GM12878 (cell line): ENCODE measurements at regions of chr12 and their contacts with region 1.

Region 1: DNA sequence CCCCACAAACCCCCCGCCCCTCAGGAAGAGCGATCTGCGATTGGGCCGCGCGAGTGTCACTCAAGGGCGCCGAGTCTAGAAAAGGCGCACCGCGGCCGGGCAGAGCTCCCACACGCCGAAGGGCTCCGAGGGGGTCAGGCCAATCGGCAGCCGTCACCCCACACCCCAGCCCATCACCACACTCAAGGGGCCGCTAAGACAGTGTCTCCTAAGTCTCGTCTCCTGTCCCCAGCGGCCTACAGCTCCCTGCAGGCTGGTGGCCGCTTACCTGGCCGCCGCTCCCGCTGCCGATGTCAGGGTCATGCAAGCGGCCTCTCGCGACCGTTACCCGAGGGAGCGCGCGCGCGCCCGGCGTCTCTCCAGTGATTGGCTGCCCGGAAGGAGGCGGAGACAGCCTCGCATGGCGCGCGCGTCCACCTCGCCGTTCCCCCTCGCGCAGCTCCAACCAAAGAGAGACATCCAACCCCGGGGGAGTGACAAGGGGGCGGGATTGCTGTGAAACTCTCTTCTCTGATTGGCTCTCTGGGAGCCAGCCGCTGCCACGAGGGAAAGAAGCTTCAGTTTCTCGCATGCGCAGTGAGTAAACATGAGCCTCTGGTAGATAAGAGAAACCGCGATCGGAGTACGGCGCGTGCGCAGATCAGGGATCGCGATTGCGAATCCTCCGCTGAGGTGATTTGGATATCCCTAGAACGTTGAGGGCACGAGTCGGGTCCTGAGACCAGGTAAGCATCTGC is at the starts of genes MPHOSPH9 and MTRFR:
- DNase-seq: peak; percentile 100
- ATAC-seq: peak; percentile 91
- H3K4me3 ChIP-seq: peak within 1 kb of the TSS; percentile 95
- H3K27ac ChIP-seq: peak within 1 kb of the TSS; percentile 90
- H3K4me1 ChIP-seq: peaks cover 24% of the 10 kb centered on the region
- H3K27me3 ChIP-seq: no peaks in the 10 kb centered on the region
- CTCF ChIP-seq: no peak
- EP300 ChIP-seq: peak in 1 of 2 experiments; percentile 41; a peak in 2 of 4 replicates
- POLR2A ChIP-seq: peak; percentile 99
- RAD21 ChIP-seq: no peak
- polyA plus RNA-seq, gene MPHOSPH9: 11.5 to 13.3 TPM
- polyA plus RNA-seq, gene MTRFR: 30.8 to 33.4 TPM

Region 2: GRCh38 chr12:121802846-121803630 is 1429.9 kb before region 1 on chr12:
- CTCF ChIA-PET with region 1: no interaction called
- POLR2A ChIA-PET with region 1: no interaction called
- RAD21 ChIA-PET with region 1: interaction called, 4 read pairs
- SMC1A ChIA-PET with region 1: no interaction called
- in situ Hi-C with region 1: no loop called
- intact Hi-C with region 1: loop called (anchors 5 kb)
- DNase-seq: peak; percentile 88
- ATAC-seq: peak; percentile 66
- H3K4me3 ChIP-seq: peak overlapping the region; percentile 66
- H3K27ac ChIP-seq: peak overlapping the region; percentile 97
- H3K4me1 ChIP-seq: peaks cover 27% of the 10 kb centered on the region
- H3K27me3 ChIP-seq: no peaks in the 10 kb centered on the region
- CTCF ChIP-seq: no peak
- EP300 ChIP-seq: no peak
- POLR2A ChIP-seq: peak; percentile 89
- RAD21 ChIP-seq: no peak

Region 3: DNA sequence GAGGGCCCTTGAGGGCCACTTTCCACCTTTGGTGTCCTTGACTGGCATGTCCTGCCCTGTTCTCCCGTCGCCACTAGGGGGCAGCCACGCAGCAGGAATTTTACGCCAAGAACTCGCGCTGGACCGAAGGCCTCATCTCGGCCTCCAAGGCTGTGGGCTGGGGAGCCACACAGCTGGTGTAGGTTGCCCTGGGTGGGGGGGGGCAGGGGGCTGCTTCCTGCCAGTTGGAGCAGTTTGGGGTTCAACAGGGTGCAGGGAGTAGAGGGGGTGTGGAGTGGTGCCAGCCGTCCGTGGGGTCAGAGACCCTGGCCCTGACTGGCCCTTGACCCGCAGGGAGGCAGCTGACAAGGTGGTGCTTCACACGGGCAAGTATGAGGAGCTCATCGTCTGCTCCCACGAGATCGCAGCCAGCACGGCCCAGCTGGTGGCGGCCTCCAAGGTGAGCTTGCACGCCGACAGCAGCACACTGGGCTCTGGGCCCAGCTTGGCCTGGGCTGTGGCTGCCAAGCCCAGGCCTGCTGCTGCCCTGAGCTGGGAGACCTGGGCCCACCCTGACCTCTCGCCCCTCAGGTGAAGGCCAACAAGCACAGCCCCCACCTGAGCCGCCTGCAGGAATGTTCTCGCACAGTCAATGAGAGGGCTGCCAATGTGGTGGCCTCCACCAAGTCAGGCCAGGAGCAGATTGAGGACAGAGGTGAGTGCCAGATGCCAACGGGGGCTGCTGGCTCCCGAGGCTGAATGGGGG is 372.5 kb before region 1 on chr12:
- CTCF ChIA-PET with region 1: interaction called, 4 read pairs
- POLR2A ChIA-PET with region 1: no interaction called
- RAD21 ChIA-PET with region 1: interaction called, 3 read pairs
- SMC1A ChIA-PET with region 1: interaction called, 11 read pairs
- in situ Hi-C with region 1: loop called (anchors 25 kb)
- intact Hi-C with region 1: no loop called
- DNase-seq: no peak
- ATAC-seq: peak; percentile 85
- H3K4me3 ChIP-seq: no peak overlapping the region
- H3K27ac ChIP-seq: no peak overlapping the region
- H3K4me1 ChIP-seq: no peaks in the 10 kb centered on the region
- H3K27me3 ChIP-seq: no peaks in the 10 kb centered on the region
- CTCF ChIP-seq: peak; percentile 87 to 93 (median 91)
- EP300 ChIP-seq: no peak
- POLR2A ChIP-seq: no peak
- RAD21 ChIP-seq: peak; percentile 99

Region 4: DNA sequence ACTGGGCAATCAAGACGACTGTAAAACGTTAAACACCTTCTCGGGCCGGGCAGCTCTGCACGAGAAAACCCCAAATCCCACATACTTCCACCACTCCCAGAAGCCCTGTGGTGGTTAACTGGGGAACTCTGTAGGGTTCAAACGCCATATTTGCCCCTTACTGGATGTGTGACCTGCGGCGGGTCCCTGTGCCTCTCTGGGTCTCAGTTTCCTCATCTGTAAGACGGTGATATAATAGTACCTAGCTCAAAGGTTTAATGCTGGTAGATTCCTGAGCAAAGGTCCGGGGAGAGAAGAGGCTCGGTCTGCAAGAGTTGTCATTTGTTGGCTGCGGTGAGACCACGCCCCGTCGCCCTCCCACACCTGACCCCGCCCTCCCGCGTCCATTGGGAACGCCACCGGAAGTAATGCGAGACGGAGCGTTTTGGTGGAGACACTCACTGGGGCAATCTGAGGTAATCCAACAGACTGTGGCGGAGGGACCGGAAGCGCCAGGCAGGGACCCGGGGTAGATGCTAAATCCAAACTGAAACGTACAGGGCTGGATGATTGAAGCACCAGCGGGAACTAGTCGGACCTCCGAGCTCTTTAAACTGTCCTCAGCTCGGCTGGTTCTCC is 258.6 kb before region 1 on chr12:
- CTCF ChIA-PET with region 1: interaction called, 15 read pairs
- POLR2A ChIA-PET with region 1: interaction called, 9 read pairs
- RAD21 ChIA-PET with region 1: interaction called, 14 read pairs
- SMC1A ChIA-PET with region 1: interaction called, 4 read pairs
- in situ Hi-C with region 1: loop called (anchors 5 kb)
- intact Hi-C with region 1: loop called (anchors 2 kb)
- DNase-seq: peak; percentile 96
- ATAC-seq: peak; percentile 92
- H3K4me3 ChIP-seq: peak overlapping the region; percentile 84
- H3K27ac ChIP-seq: peak overlapping the region; percentile 99
- H3K4me1 ChIP-seq: peaks cover 17% of the 10 kb centered on the region
- H3K27me3 ChIP-seq: no peaks in the 10 kb centered on the region
- CTCF ChIP-seq: no peak
- EP300 ChIP-seq: no peak
- POLR2A ChIP-seq: peak; percentile 53; the same call in 1 of the 2 replicates
- RAD21 ChIP-seq: no peak

Region 5: GRCh38 chr12:123043536-123044001 is 189.4 kb before region 1 on chr12:
- CTCF ChIA-PET with region 1: interaction called, 72 read pairs
- POLR2A ChIA-PET with region 1: interaction called, 5 read pairs
- RAD21 ChIA-PET with region 1: interaction called, 50 read pairs
- SMC1A ChIA-PET with region 1: interaction called, 21 read pairs
- in situ Hi-C with region 1: no loop called
- intact Hi-C with region 1: loop called (anchors 1 kb)
- DNase-seq: no peak
- ATAC-seq: peak; percentile 89
- H3K4me3 ChIP-seq: no peak overlapping the region
- H3K27ac ChIP-seq: no peak overlapping the region
- H3K4me1 ChIP-seq: no peaks in the 10 kb centered on the region
- H3K27me3 ChIP-seq: no peaks in the 10 kb centered on the region; a peak in 2 of 4 replicates
- CTCF ChIP-seq: peak; percentile 58 to 70 (median 67); a peak in 5 of 6 replicates
- EP300 ChIP-seq: no peak
- POLR2A ChIP-seq: no peak
- RAD21 ChIP-seq: peak; percentile 74

Region 6: DNA sequence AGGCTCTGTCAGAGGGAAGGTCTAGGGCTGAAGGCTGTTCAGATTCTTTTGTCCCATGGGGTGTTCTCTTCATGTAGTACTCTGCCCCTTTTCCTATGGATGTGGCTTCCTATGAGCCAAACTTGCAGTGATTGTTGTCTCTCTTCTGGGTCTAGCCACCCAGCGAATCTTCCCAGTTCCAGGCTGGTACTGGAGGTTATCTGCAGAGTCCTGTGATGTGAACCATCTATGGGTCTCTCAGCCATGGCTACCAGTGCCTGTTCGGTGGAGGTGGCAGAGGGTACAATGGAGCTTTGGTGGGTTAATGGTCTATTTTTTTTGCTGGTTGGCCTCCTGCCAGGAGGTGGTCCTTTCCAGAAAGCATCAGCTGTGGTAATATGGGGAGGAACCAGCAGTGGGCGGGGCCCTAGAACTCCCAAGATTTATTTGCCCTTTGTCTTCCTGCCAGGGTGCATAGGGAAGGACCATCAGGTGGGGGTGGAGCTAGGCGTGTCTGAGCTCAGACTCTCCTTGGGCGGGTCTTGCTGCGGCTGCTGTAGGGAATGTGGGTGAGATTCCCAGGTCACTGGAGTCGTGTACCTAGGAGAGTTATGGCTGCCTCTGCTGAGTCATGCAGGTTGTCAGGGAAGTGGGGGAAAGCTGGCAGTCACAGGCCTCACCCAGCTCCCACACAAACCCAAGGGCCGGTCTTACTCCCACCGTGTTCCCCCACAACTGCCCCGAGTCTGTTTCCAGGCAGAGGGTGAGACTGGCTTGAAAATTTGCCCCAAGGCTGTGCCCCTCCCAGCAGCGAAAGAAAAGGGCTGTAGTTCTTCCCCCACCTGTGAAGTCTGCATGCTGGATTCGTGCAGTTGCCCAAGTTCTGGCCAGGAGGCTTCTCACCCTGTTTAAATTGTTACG is 17.8 kb after region 1 on chr12:
- CTCF ChIA-PET with region 1: interaction called, 17 read pairs
- POLR2A ChIA-PET with region 1: interaction called, 10 read pairs
- RAD21 ChIA-PET with region 1: interaction called, 6 read pairs
- SMC1A ChIA-PET with region 1: interaction called, 9 read pairs
- in situ Hi-C with region 1: no loop called
- intact Hi-C with region 1: no loop called
- DNase-seq: no peak
- ATAC-seq: no peak
- H3K4me3 ChIP-seq: no peak overlapping the region
- H3K27ac ChIP-seq: no peak overlapping the region
- H3K4me1 ChIP-seq: no peaks in the 10 kb centered on the region
- H3K27me3 ChIP-seq: no peaks in the 10 kb centered on the region
- CTCF ChIP-seq: no peak
- EP300 ChIP-seq: no peak
- POLR2A ChIP-seq: no peak
- RAD21 ChIP-seq: no peak

Region 7: DNA sequence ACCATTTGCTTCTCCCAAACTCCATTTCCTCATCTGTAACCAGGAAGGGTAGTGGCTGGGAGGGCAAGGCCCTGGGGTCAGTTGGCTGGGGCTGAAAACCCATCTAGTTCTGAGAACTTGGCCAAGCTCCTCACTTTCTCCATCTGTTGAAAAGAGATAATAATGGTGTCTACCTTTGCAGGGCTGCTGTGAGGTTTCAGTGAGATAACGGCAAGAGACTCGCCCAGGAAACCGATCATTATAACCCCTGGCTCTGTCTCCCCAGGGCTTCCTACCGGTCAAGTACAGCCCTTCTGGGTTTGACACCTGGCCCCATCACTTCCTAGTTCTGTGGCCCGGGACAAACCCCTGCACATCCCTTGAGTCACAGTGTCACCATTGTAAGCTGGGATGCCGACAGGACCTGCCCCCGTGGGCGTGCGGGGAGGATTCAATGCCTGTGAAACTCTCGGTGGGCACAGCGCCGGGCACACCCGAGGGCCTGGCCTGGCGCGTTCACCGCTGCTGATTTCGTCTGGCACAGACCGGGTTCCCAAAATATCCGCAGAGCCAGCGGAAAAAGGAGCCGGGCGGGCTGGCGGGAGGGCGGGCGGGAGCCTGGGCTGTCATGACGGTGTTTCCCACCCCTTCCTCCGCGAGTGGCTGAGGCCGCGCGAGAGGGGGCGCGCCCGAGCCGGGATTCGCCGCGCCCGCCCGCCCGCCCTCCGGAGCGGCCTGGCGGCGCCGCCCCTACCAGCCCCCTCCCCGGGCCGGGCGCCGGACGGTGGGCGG is 155.4 kb after region 1 on chr12:
- CTCF ChIA-PET with region 1: interaction called, 4 read pairs
- POLR2A ChIA-PET with region 1: interaction called, 10 read pairs
- RAD21 ChIA-PET with region 1: interaction called, 6 read pairs
- SMC1A ChIA-PET with region 1: interaction called, 9 read pairs
- in situ Hi-C with region 1: no loop called
- intact Hi-C with region 1: no loop called
- DNase-seq: peak; percentile 21
- ATAC-seq: peak; percentile 52
- H3K4me3 ChIP-seq: peak overlapping the region; percentile 98
- H3K27ac ChIP-seq: peak overlapping the region; percentile 66
- H3K4me1 ChIP-seq: peaks cover 20% of the 10 kb centered on the region
- H3K27me3 ChIP-seq: no peaks in the 10 kb centered on the region
- CTCF ChIP-seq: 0 out of 6 replicates have a peak, but pooled peaks of 1 of the 3 experiments have one; percentile 13
- EP300 ChIP-seq: 0 out of 4 replicates have a peak, but pooled peaks of 1 of the 2 experiments have one; percentile 10
- POLR2A ChIP-seq: no peak
- RAD21 ChIP-seq: no peak

Region 8: DNA sequence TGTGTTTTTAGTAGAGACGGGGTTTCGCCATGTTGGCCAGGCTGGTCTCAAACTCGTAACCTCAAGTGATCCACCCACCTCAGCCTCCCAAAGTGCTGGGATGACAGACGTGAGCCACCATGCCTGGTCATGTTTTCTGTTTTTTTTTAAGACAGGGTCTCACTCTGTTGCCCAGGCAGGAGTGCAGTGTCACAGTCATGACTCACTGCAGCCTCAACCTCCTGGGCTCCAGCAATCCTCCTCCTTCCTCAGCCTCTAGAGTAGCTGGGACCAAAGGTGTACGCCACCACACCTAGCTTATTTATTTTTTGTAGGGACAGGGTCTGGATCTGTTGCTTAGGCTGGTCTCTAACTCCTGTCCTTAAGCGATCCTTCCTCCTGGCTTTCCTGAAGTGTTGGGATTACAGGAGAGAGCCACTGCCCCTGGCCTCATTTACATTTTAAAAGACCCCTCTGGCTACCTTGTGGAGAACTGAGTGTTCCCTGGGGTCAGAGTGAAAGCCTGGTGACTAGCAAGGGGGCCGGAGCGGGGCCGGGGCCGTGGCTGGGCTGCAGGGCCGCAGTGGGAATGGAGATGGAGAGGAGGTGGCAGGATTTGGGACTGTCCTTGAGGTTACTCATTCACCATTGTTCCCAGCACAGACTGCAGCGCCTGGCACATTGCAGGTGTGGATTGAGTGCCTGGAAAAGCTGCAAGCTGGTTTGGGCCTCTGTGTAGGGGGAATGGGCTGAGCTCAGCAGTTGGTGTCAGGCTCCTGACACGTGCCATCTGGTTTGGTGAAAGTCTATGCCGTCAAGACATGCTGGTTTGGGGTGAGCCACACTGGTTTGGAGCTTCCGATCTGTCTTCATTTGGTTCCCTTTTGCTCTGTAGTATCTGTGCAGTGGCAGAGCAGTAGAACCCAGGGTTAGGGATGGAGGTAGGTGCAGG is 169.0 kb after region 1 on chr12:
- CTCF ChIA-PET with region 1: no interaction called
- POLR2A ChIA-PET with region 1: no interaction called
- RAD21 ChIA-PET with region 1: no interaction called
- SMC1A ChIA-PET with region 1: no interaction called
- in situ Hi-C with region 1: no loop called
- intact Hi-C with region 1: no loop called
- DNase-seq: no peak
- ATAC-seq: no peak
- H3K4me3 ChIP-seq: no peak overlapping the region
- H3K27ac ChIP-seq: no peak overlapping the region
- H3K4me1 ChIP-seq: no peaks in the 10 kb centered on the region
- H3K27me3 ChIP-seq: no peaks in the 10 kb centered on the region
- CTCF ChIP-seq: no peak
- EP300 ChIP-seq: no peak
- POLR2A ChIP-seq: no peak
- RAD21 ChIP-seq: no peak

Region 9: GRCh38 chr12:123559468-123559867 is 326.5 kb after region 1 on chr12:
- CTCF ChIA-PET with region 1: no interaction called
- POLR2A ChIA-PET with region 1: no interaction called
- RAD21 ChIA-PET with region 1: no interaction called
- SMC1A ChIA-PET with region 1: no interaction called
- in situ Hi-C with region 1: no loop called
- intact Hi-C with region 1: no loop called
- DNase-seq: no peak
- ATAC-seq: no peak
- H3K4me3 ChIP-seq: no peak overlapping the region
- H3K27ac ChIP-seq: no peak overlapping the region
- H3K4me1 ChIP-seq: no peaks in the 10 kb centered on the region
- H3K27me3 ChIP-seq: no peaks in the 10 kb centered on the region
- CTCF ChIP-seq: no peak
- EP300 ChIP-seq: no peak
- POLR2A ChIP-seq: no peak
- RAD21 ChIP-seq: no peak